A549 (cell line): ENCODE measurements at regions of chrX and their contacts with region 1.

Region 1: GRCh38 chrX:20362268-20363267 is 95.9 kb upstream of the RPS6KA3 start:
- DNase-seq: peak; percentile 60 to 95
- ATAC-seq: peak; percentile 88 to 91
- H3K4me3 ChIP-seq: peak overlapping the region; percentile 32
- H3K27ac ChIP-seq: peak overlapping the region; percentile 85 to 97
- H3K4me1 ChIP-seq: peaks cover 24% of the 10 kb centered on the region
- CTCF ChIP-seq: no peak
- EP300 ChIP-seq: peak; percentile 23 to 24; a peak in 2 of 5 replicates
- POLR2A ChIP-seq: no peak
- RAD21 ChIP-seq: peak; percentile 1 to 23; a peak in 2 of 5 replicates

Region 2: DNA sequence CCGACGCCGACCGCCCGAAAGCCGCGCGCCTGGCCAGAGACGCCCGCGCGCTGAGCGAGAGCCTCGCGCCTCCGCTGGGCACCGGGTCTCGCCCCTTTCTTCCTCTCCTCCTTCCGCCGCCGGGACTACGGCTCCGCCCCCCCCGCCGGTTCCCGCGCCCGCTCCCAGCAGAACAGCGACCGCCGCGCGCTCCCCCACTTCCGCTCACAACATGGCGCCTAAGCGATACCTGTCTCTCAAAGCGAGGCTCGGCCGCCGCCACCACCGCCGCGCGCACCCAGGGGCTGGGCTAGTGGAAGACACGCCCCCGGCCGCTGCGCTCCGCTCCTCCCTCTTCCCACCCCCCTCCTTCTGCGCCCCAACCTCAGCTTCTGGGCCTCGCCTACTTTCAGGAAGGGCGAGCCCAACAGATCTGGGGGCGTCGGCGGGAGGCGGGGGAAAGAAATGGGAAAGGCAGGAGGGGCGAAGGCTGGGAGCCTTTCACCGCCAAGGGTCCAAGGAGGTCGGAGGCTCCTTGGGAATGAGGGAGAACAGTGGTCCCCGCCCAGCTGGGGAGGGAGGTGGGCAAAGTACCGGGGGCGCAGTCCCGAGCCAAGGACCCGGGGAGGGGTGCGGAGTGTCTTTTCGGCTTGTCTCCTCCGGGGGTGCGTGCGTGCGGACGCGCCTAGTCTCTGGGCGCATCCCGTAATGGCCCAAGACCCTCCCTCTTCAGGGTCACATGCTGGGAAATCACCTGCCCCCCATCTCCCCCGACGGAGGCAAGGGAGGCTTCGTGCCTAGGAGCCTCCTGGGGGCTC is 95.6 kb before region 1 on chrX and contains the start of gene RPS6KA3:
- CTCF ChIA-PET with region 1: interaction called, 4 read pairs
- POLR2A ChIA-PET with region 1: interaction called, 26 read pairs
- DNase-seq: peak; percentile 63 to 93
- ATAC-seq: peak; percentile 83 to 89
- H3K4me3 ChIP-seq: peak within 1 kb of the TSS; percentile 65
- H3K27ac ChIP-seq: peak within 1 kb of the TSS; percentile 96 to 99
- H3K4me1 ChIP-seq: peaks cover 49% of the 10 kb centered on the region
- CTCF ChIP-seq: no peak
- EP300 ChIP-seq: no peak
- POLR2A ChIP-seq: peak; percentile 29; the same call in 1 of the 2 replicates
- RAD21 ChIP-seq: no peak
- polyA plus RNA-seq, gene RPS6KA3: 109 and 117 TPM in 2 replicates

Region 3: GRCh38 chrX:20333672-20334071 is 28.9 kb before region 1 on chrX:
- CTCF ChIA-PET with region 1: no interaction called
- POLR2A ChIA-PET with region 1: no interaction called
- DNase-seq: no peak
- ATAC-seq: no peak
- H3K4me3 ChIP-seq: no peak overlapping the region
- H3K27ac ChIP-seq: no peak overlapping the region
- H3K4me1 ChIP-seq: no peaks in the 10 kb centered on the region
- CTCF ChIP-seq: no peak
- EP300 ChIP-seq: no peak
- POLR2A ChIP-seq: no peak
- RAD21 ChIP-seq: no peak

Region 4: GRCh38 chrX:20378291-20378920 is 15.8 kb after region 1 on chrX:
- CTCF ChIA-PET with region 1: no interaction called
- POLR2A ChIA-PET with region 1: interaction called, 18 read pairs
- DNase-seq: peak; percentile 32 to 85
- ATAC-seq: peak; percentile 74 to 83
- H3K4me3 ChIP-seq: no peak overlapping the region
- H3K27ac ChIP-seq: peak overlapping the region; percentile 60 to 71
- H3K4me1 ChIP-seq: peaks cover 84% of the 10 kb centered on the region
- CTCF ChIP-seq: no peak
- EP300 ChIP-seq: no peak
- POLR2A ChIP-seq: no peak
- RAD21 ChIP-seq: no peak

Region 5: DNA sequence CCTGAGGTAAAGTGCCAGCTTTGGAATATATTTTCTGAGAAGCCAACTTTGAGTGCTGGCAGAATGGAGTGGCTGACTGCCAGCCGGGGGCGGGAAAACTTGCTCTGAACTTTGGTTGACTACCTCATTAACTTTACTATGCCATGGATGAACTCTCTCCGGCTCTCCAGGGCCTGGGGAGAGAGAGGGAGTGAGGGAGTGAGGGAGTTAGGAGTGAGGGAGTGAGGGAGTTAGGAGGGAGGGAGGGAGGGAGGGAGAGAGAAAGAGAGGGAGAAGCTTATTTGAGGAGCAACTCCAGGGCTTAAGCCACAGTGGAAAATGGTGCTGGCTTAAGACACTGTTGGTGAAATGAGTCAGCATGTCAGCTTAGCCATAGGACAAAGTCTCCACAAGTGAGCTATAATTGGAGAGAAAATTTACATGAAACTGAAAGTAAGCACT is 185.1 kb after region 1 on chrX:
- CTCF ChIA-PET with region 1: no interaction called
- POLR2A ChIA-PET with region 1: no interaction called
- DNase-seq: peak in 1 of 2 experiments; percentile 74
- ATAC-seq: peak; percentile 50 to 74
- H3K4me3 ChIP-seq: no peak overlapping the region
- H3K27ac ChIP-seq: peak overlapping the region; percentile 67 to 73
- H3K4me1 ChIP-seq: peaks cover 11% of the 10 kb centered on the region; the same call in 2 of the 3 replicates
- CTCF ChIP-seq: no peak
- EP300 ChIP-seq: no peak
- POLR2A ChIP-seq: no peak
- RAD21 ChIP-seq: no peak

Region 6: DNA sequence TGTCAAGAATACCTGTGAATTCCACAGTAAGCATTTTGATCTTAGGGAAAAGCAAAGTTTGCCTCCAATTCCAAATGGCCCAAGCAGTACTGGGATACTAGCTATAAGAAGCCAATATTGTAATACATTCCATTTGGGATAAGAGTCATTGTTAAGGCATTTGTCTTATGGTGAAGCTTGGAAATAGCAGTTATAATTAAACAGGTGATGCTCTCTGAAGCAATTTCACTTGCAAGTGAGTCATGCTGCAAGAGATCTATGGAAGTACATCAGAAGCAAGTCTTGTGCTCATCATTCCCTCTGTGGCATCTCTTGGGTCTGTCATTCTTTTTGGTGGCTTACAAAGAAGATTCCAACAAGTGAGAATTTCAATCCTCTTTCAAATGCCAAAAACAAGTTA is 290.5 kb after region 1 on chrX:
- CTCF ChIA-PET with region 1: no interaction called
- POLR2A ChIA-PET with region 1: no interaction called
- DNase-seq: no peak
- ATAC-seq: no peak
- H3K4me3 ChIP-seq: no peak overlapping the region
- H3K27ac ChIP-seq: no peak overlapping the region
- H3K4me1 ChIP-seq: no peaks in the 10 kb centered on the region
- CTCF ChIP-seq: no peak
- EP300 ChIP-seq: no peak
- POLR2A ChIP-seq: no peak
- RAD21 ChIP-seq: no peak